HepG2 (cell line): ENCODE measurements at regions of chr11 and their contacts with region 1.

Region 1: GRCh38 chr11:73661035-73661628 is 14.8 kb downstream of the PLEKHB1 start:
- DNase-seq: no peak
- ATAC-seq: peak; percentile 81
- H3K4me3 ChIP-seq: no peak overlapping the region
- H3K27ac ChIP-seq: no peak overlapping the region
- H3K4me1 ChIP-seq: no peaks in the 10 kb centered on the region; the same call in 1 of the 2 replicates
- H3K27me3 ChIP-seq: no peaks in the 10 kb centered on the region
- CTCF ChIP-seq: peak; percentile 97
- EP300 ChIP-seq: no peak
- POLR2A ChIP-seq: no peak
- RAD21 ChIP-seq: peak; percentile 98

Region 2: DNA sequence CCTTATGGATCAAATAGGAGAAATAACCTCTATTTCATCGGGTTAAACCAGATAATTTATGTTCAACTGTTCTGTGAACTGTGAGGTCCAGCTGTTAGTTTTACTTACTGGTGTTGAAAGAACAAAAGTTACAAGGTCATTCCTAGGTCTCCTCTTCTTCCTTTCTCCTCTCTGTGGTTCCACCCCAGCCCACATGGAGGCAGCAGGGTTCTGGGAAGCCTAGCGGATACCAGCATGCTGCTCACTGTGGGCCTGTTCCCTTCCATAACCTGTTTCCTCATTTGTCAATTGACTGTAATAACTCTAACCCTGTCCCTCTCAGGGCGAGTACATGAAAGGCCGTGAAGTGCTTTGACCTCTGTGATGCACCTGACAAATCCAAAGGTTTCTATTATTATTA is 257.1 kb before region 1 on chr11:
- CTCF ChIA-PET with region 1: interaction called, 6 read pairs
- POLR2A ChIA-PET with region 1: no interaction called
- in situ Hi-C with region 1: loop called (anchors 5 kb)
- intact Hi-C with region 1: loop called (anchors 2 kb)
- DNase-seq: peak; percentile 74
- ATAC-seq: peak; percentile 97
- H3K4me3 ChIP-seq: no peak overlapping the region
- H3K27ac ChIP-seq: no peak overlapping the region
- H3K4me1 ChIP-seq: peaks cover 8% of the 10 kb centered on the region
- H3K27me3 ChIP-seq: no peaks in the 10 kb centered on the region
- CTCF ChIP-seq: peak; percentile 91
- EP300 ChIP-seq: no peak
- POLR2A ChIP-seq: no peak
- RAD21 ChIP-seq: peak; percentile 83